Activated T-helper 2 cell treated with anti-CD3 and anti-CD28 coated beads, Interferon-gamma antibody, Interleukin-2, Interleukin-4, amounts not matched to agents 10 μg/mL and 5 μg/mL and 100 μg/mL, durations not matched to agents 14 hours and 24 hours and 36 hours (primary cell): ENCODE measurements at regions of chr1 and their contacts with region 1.

Region 1: GRCh38 chr1:58652651-58653184 is 47.1 kb downstream of the MYSM1 start:
- DNase-seq: peak; percentile 31
- H3K4me3 Mint-ChIP-seq: no peak overlapping the region
- H3K27ac Mint-ChIP-seq: no peak overlapping the region
- H3K4me1 Mint-ChIP-seq: peaks cover 19% of the 10 kb centered on the region
- H3K27me3 Mint-ChIP-seq: no peaks in the 10 kb centered on the region

Region 2: DNA sequence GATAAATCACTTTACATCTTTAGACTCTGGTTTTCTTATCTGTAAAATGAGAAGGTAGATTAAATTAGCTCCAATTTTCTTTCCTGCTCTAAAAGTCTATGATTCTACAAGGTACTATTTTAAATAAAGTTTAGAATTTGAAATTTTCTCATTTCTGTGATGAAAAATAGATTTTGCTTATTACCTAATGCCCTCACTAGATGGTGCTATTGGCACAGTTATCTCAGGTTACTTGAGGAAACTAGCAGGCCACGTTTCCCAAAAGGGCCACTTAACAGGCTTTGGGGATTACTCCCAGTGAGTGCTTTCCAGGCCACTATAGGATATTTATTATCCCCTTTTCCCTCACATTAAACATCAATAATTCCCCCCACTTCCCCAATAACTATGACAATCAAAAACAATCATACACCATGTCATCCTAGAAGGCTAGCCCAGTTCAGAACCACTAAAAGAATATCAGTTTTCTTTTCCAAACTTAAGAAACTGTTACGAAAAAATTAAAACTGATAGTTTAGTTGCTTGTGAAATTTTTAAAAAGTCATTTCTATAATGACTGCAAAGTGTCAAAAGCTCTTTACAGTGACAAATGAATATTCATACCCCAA is 136.8 kb before region 1 on chr1:
- intact Hi-C with region 1: loop called (anchors 1 kb)
- DNase-seq: no peak
- H3K4me3 Mint-ChIP-seq: no peak overlapping the region
- H3K27ac Mint-ChIP-seq: no peak overlapping the region
- H3K4me1 Mint-ChIP-seq: peaks cover 14% of the 10 kb centered on the region
- H3K27me3 Mint-ChIP-seq: no peaks in the 10 kb centered on the region

Region 3: GRCh38 chr1:58573705-58574591 is 78.8 kb before region 1 on chr1:
- intact Hi-C with region 1: loop called (anchors 1 kb)
- DNase-seq: peak; percentile 42
- H3K4me3 Mint-ChIP-seq: no peak overlapping the region
- H3K27ac Mint-ChIP-seq: no peak overlapping the region
- H3K4me1 Mint-ChIP-seq: peaks cover 32% of the 10 kb centered on the region
- H3K27me3 Mint-ChIP-seq: peaks cover 75% of the 10 kb centered on the region

Region 4: DNA sequence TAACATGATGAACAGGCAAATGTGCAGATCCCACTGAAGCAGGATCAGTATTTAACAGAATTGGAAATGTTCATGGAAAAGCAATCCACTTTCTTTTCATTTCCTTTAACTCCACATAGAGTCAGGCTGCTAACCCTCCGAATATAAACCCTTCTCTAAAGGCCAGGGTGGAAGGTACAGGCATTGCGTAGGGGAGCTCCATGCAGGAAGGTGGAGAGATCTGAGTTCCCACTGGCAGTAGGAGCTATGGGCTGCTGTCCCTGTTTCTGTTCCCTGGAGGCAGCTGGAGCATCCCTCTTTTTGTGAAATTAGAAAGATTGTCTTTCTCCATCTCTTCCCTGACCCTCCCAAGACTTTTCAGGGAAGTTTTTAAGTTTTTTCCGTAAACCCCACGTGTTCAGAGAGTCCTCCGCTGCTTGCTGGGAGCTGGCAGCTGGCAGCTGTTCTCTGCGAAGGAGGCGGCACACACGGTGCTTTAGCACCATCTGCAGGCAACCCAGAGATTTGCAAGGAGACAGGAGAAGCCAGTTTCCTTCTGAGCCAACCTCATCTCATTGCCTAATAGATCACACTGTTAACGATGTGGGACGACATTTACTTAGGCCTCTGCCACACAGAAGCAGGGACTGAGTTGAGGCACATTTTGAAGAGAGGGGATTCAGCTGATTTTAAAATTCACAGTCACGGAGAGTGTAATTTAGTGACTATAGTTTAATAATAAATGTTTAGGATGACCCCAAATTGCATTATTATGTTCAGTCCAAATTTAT is 1106.6 kb after region 1 on chr1:
- intact Hi-C with region 1: loop called (anchors 2 kb)
- DNase-seq: peak; percentile 56
- H3K4me3 Mint-ChIP-seq: no peak overlapping the region
- H3K27ac Mint-ChIP-seq: no peak overlapping the region
- H3K4me1 Mint-ChIP-seq: peaks cover 2% of the 10 kb centered on the region
- H3K27me3 Mint-ChIP-seq: no peaks in the 10 kb centered on the region